Activated CD4-positive, alpha-beta memory T cell treated with anti-CD3 and anti-CD28 coated beads for 36 hours (primary cell): ENCODE measurements at regions of chr2 and their contacts with region 1.

Region 1: GRCh38 chr2:26577434-26578112 is 63.6 kb downstream of the CIB4 start:
- DNase-seq: peak; percentile 74
- H3K4me3 Mint-ChIP-seq: no peak overlapping the region
- H3K27ac Mint-ChIP-seq: no peak overlapping the region
- H3K4me1 Mint-ChIP-seq: no peaks in the 10 kb centered on the region
- H3K27me3 Mint-ChIP-seq: peaks cover 10% of the 10 kb centered on the region

Region 2: DNA sequence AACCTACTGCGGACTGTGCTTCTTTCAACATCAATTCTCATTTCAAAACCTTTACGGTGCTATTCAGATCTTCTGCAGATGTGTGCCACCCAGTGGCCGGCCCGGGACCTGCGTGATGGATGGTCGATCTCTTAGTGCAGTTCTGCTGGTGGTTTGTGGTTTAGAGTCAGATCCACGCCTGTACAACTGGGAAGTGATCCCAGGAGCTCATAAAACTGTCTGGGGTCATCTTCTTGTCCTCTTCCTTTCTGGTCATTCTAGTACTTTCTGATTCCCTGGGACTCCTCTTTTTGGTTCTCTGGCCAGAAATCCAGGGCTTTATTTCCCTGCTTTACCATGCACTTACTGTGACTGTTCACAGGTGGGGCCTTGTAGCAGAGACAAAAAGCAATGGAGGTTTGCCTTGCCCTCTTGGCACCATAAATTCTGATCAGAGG is 247.4 kb before region 1 on chr2:
- CTCF ChIA-PET with region 1: no interaction called
- POLR2A ChIA-PET with region 1: no interaction called
- intact Hi-C with region 1: no loop called
- DNase-seq: peak; percentile 92
- H3K4me3 Mint-ChIP-seq: peak overlapping the region; percentile 10
- H3K27ac Mint-ChIP-seq: no peak overlapping the region
- H3K4me1 Mint-ChIP-seq: peaks cover 12% of the 10 kb centered on the region
- H3K27me3 Mint-ChIP-seq: no peaks in the 10 kb centered on the region

Region 3: DNA sequence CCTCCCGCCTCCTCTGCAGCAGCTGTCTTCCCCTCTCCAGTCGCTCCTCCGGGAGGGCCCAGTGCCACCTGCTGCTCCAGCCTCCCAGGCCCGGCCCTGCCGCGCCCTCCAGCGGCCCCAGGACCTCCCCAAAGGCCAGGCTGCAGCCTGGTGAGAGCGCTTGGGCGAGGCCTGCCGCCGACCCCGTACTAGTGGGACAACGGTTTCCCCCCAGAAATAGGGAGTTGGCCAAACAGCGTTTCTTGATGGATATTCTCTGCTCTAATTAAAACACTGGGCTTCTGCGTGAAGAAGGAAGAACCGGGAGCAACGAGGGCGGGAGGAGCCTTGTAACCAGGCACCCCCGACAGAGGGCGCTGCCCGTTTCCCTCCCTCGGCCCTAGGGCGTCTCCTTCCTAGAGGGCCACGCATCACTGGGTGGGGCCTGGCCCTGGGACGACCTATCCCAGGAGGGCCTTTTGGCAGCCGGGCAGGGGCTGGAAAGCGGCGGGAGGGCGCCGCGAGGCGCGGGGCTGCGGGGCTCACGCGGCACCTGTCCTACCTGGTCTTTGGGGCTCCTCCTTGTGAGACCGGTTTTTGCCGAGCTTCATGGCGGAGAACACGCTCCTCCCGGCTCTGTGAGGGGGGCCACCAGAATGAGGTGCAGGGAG is 74.2 kb before region 1 on chr2:
- CTCF ChIA-PET with region 1: interaction called, 37 read pairs
- POLR2A ChIA-PET with region 1: no interaction called
- intact Hi-C with region 1: loop called (anchors 1 kb)
- DNase-seq: peak; percentile 91
- H3K4me3 Mint-ChIP-seq: peak overlapping the region; percentile 60
- H3K27ac Mint-ChIP-seq: no peak overlapping the region
- H3K4me1 Mint-ChIP-seq: peaks cover 5% of the 10 kb centered on the region
- H3K27me3 Mint-ChIP-seq: peaks cover 3% of the 10 kb centered on the region

Region 4: GRCh38 chr2:26521054-26521912 is 56.3 kb before region 1 on chr2:
- CTCF ChIA-PET with region 1: interaction called, 19 read pairs
- POLR2A ChIA-PET with region 1: no interaction called
- intact Hi-C with region 1: no loop called
- DNase-seq: peak; percentile 22
- H3K4me3 Mint-ChIP-seq: no peak overlapping the region
- H3K27ac Mint-ChIP-seq: no peak overlapping the region
- H3K4me1 Mint-ChIP-seq: peaks cover 15% of the 10 kb centered on the region
- H3K27me3 Mint-ChIP-seq: no peaks in the 10 kb centered on the region

Region 5: DNA sequence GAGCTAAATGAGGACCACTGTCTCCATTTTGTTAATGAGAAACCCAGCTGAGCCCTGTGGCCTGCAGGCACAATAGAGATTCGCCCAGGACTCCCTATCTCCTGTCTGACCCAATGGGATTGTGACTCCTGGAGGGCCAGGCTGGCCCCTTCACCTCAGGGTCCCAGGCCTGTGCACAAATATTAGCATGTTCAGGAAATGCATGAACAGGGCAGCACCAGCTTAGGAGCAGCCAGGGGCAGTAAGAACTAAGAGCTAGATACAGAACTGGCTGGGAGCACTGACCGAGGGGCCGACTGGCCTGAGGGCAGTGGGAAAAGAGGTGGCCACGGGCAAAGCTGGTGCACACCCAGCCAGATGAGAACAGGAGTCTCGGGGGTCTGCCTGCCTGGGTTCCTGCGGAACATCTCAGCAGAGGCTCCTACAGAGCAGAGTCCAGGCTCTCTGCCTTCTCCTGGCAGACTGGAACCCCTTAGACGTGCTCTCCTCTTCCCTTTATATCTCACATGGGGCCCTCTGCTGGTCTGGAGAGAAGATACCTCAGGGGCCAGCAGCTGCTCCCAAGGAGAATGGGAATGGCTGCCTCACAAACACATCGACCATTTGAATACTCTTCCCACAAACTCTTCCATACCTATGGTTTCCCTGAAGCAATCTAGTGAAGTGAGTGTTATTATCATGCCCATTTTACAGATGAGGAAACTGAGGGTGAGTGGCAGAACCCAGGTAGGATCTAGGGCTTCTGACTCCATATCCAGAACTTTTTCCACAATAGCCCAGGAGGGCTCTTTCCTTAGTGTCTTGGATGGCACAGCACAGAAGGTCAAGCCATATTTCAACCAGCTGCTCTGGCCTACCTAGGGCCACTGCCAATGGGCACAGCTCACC is 22.1 kb before region 1 on chr2:
- CTCF ChIA-PET with region 1: interaction called, 13 read pairs
- POLR2A ChIA-PET with region 1: no interaction called
- intact Hi-C with region 1: no loop called
- DNase-seq: no peak
- H3K4me3 Mint-ChIP-seq: no peak overlapping the region
- H3K27ac Mint-ChIP-seq: no peak overlapping the region
- H3K4me1 Mint-ChIP-seq: no peaks in the 10 kb centered on the region
- H3K27me3 Mint-ChIP-seq: peaks cover 37% of the 10 kb centered on the region

Region 6: DNA sequence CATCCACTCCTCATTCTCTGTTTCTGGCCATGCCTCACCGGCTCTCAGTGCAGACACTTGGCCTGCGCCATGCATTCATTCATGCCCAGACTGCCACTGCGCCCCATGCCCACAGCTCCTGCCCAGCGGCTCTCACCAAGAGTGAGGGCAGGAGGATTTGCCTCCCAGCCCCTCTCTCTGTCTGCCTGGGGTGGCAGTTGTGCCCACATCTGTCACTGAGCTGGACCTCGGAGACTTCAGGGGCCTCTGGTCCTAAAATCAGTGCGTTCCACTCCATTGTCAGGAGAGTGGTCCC is 11.5 kb before region 1 on chr2:
- CTCF ChIA-PET with region 1: interaction called, 11 read pairs
- POLR2A ChIA-PET with region 1: no interaction called
- intact Hi-C with region 1: no loop called
- DNase-seq: no peak
- H3K4me3 Mint-ChIP-seq: no peak overlapping the region
- H3K27ac Mint-ChIP-seq: no peak overlapping the region
- H3K4me1 Mint-ChIP-seq: peaks cover 2% of the 10 kb centered on the region
- H3K27me3 Mint-ChIP-seq: peaks cover 48% of the 10 kb centered on the region

Region 7: GRCh38 chr2:26590508-26590907 is 12.9 kb after region 1 on chr2:
- CTCF ChIA-PET with region 1: interaction called, 10 read pairs
- POLR2A ChIA-PET with region 1: no interaction called
- intact Hi-C with region 1: no loop called
- DNase-seq: no peak
- H3K4me3 Mint-ChIP-seq: no peak overlapping the region
- H3K27ac Mint-ChIP-seq: no peak overlapping the region
- H3K4me1 Mint-ChIP-seq: peaks cover 2% of the 10 kb centered on the region
- H3K27me3 Mint-ChIP-seq: peaks cover 29% of the 10 kb centered on the region

Region 8: DNA sequence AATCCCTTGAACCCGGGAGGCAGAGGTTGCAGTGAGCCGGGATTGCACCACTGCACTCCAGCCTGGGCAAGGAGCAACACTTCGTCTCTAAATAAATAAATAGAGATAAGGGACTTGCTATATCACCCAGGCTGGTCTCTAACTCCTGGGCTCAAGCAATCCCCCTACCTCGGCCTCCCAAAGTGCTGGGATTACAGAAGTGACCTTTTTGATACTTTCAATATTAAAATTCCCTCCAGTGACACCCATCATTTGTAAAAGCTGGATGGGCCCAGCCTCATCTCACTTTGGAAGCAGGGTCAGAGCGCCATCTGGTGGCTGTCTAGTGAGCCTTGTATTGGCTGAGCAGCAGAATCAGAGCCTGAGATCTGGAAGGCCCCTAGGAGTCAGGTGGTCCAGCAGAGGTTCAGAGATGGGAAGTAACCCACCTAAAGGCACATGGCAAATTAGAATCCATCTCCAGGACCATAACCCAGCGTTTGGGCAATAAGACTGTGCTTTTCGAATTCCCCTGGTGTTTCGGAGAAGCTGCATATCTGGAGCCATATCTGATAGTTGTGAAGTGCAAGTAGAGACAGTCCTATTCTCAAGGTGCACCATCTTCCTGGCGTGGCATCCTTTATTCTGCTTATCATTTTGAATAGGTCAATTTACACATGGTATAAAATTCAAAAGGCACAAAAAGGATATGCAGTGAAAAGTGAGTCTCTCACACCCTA is 168.2 kb after region 1 on chr2:
- CTCF ChIA-PET with region 1: interaction called, 10 read pairs
- POLR2A ChIA-PET with region 1: no interaction called
- intact Hi-C with region 1: no loop called
- DNase-seq: peak; percentile 86
- H3K4me3 Mint-ChIP-seq: no peak overlapping the region
- H3K27ac Mint-ChIP-seq: no peak overlapping the region
- H3K4me1 Mint-ChIP-seq: no peaks in the 10 kb centered on the region
- H3K27me3 Mint-ChIP-seq: no peaks in the 10 kb centered on the region